Activated CD8-positive, alpha-beta T cell treated with anti-CD3 and anti-CD28 coated beads for 36 hours (primary cell): ENCODE measurements at regions of chr15 and their contacts with region 1.

Region 1: GRCh38 chr15:31435261-31435911 is 108.8 kb downstream of the KLF13 start:
- DNase-seq: peak; percentile 95
- ATAC-seq: peak; percentile 71
- H3K4me3 Mint-ChIP-seq: peak overlapping the region; percentile 72
- H3K27ac Mint-ChIP-seq: peak overlapping the region; percentile 98
- H3K4me1 Mint-ChIP-seq: peaks cover 72% of the 10 kb centered on the region
- H3K27me3 Mint-ChIP-seq: no peaks in the 10 kb centered on the region
- CTCF ChIP-seq: peak; percentile 63

Region 2: GRCh38 chr15:31200735-31201151 is 234.6 kb before region 1 on chr15:
- CTCF ChIA-PET with region 1: interaction called, 7 read pairs
- POLR2A ChIA-PET with region 1: interaction called, 3 read pairs
- intact Hi-C with region 1: loop called (anchors 10 kb)
- DNase-seq: peak; percentile 80
- ATAC-seq: peak; percentile 73
- H3K4me3 Mint-ChIP-seq: no peak overlapping the region
- H3K27ac Mint-ChIP-seq: no peak overlapping the region
- H3K4me1 Mint-ChIP-seq: peaks cover 22% of the 10 kb centered on the region
- H3K27me3 Mint-ChIP-seq: no peaks in the 10 kb centered on the region
- CTCF ChIP-seq: no peak

Region 3: GRCh38 chr15:31344823-31345605 is 90.4 kb before region 1 on chr15:
- CTCF ChIA-PET with region 1: interaction called, 9 read pairs
- POLR2A ChIA-PET with region 1: interaction called, 78 read pairs
- intact Hi-C with region 1: no loop called
- DNase-seq: peak; percentile 75
- ATAC-seq: peak; percentile 40
- H3K4me3 Mint-ChIP-seq: peak overlapping the region; percentile 90
- H3K27ac Mint-ChIP-seq: peak overlapping the region; percentile 99
- H3K4me1 Mint-ChIP-seq: peaks cover 84% of the 10 kb centered on the region
- H3K27me3 Mint-ChIP-seq: no peaks in the 10 kb centered on the region
- CTCF ChIP-seq: no peak

Region 4: DNA sequence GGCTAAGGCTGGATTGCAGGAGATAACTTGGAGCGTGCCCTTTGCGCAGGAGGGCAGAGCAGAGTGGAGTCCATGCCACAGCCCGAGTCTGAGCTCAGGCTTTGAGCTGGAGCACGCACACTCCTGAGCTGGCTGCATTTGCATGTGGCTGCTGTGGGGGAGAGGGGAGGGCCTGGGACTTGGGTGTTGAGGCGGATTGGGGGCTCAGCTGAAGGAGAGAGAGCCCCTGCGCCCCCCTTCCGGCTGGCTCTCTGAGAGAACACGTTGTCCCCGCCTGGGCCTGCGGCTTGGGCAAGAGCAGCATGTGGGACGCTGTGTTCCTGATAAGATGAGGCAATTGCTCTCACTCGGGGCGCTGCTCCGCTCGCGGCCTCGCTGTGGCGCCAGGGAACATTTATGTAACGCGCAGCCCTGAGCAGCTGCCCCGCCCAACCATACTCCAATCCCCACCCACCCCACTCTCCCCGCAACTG is 69.7 kb before region 1 on chr15:
- CTCF ChIA-PET with region 1: interaction called, 134 read pairs
- POLR2A ChIA-PET with region 1: interaction called, 186 read pairs
- intact Hi-C with region 1: loop called (anchors 2 kb)
- DNase-seq: peak; percentile 95
- ATAC-seq: peak; percentile 66
- H3K4me3 Mint-ChIP-seq: peak overlapping the region; percentile 78
- H3K27ac Mint-ChIP-seq: peak overlapping the region; percentile 99
- H3K4me1 Mint-ChIP-seq: peaks cover 100% of the 10 kb centered on the region
- H3K27me3 Mint-ChIP-seq: no peaks in the 10 kb centered on the region
- CTCF ChIP-seq: peak; percentile 58

Region 5: GRCh38 chr15:31391687-31392671 is 43.4 kb before region 1 on chr15:
- CTCF ChIA-PET with region 1: interaction called, 9 read pairs
- POLR2A ChIA-PET with region 1: interaction called, 15 read pairs
- intact Hi-C with region 1: loop called (anchors 5 kb)
- DNase-seq: peak; percentile 89
- ATAC-seq: peak; percentile 87
- H3K4me3 Mint-ChIP-seq: peak overlapping the region; percentile 86
- H3K27ac Mint-ChIP-seq: peak overlapping the region; percentile 91
- H3K4me1 Mint-ChIP-seq: peaks cover 53% of the 10 kb centered on the region
- H3K27me3 Mint-ChIP-seq: no peaks in the 10 kb centered on the region
- CTCF ChIP-seq: no peak

Region 6: DNA sequence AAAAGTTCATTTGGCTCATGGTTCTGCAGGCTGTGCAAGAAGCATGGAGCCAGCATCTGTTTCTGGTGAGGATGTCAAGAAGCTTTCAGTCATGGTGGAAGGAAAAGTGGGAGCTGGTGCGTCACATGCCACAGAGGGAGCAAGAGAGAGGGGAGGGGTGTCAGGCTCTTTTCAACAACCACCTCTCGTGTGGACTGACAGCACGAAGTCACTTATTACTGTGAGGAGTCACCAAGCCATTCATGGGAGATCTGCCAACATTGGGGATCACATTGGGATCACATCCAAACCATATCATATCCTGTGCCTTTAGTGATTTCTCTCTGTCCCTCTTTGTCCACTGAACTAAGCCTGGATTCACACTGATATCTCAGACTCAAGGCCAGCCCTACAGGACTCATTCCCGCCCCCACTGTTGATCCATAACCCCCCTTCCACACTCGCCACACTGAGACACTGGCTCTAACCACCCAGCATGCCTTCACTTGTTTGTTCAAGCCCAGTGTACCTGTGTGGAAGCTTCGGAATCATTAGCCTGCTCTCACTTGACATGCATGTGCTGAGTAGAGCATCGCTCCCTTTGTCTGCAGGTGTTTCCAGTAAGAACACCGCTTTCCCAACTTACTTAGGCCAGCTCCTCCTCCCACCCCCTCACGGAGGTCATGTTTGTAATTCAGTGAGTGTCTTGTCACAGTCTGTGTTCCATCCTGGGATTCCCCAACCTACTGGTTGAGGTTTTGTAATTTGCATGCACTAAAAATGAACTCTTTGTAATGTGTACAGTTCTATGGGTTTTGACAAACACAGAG is 23.4 kb after region 1 on chr15:
- CTCF ChIA-PET with region 1: interaction called, 9 read pairs
- POLR2A ChIA-PET with region 1: interaction called, 23 read pairs
- intact Hi-C with region 1: no loop called
- DNase-seq: peak; percentile 80
- ATAC-seq: peak; percentile 98
- H3K4me3 Mint-ChIP-seq: peak overlapping the region; percentile 12
- H3K27ac Mint-ChIP-seq: peak overlapping the region; percentile 81
- H3K4me1 Mint-ChIP-seq: peaks cover 28% of the 10 kb centered on the region
- H3K27me3 Mint-ChIP-seq: no peaks in the 10 kb centered on the region
- CTCF ChIP-seq: no peak

Region 7: GRCh38 chr15:31483053-31483985 is 47.9 kb after region 1 on chr15:
- CTCF ChIA-PET with region 1: interaction called, 265 read pairs
- POLR2A ChIA-PET with region 1: interaction called, 96 read pairs
- intact Hi-C with region 1: loop called (anchors 2 kb)
- DNase-seq: peak; percentile 85
- ATAC-seq: peak; percentile 80
- H3K4me3 Mint-ChIP-seq: peak overlapping the region; percentile 82
- H3K27ac Mint-ChIP-seq: peak overlapping the region; percentile 95
- H3K4me1 Mint-ChIP-seq: peaks cover 65% of the 10 kb centered on the region
- H3K27me3 Mint-ChIP-seq: no peaks in the 10 kb centered on the region
- CTCF ChIP-seq: no peak